ENCODE measurements at regions of chrX and their contacts with region 1.

Region 1: GRCh38 chrX:10189317-10190268 is 32.8 kb downstream of the CLCN4 start:
- DNase-seq: peak; percentile 70 to 83 (median 77)
- ATAC-seq: peak; percentile 88 to 93
- H3K4me3 ChIP-seq: no peak overlapping the region
- H3K27ac ChIP-seq: no peak overlapping the region
- H3K4me1 ChIP-seq: peaks cover 2% of the 10 kb centered on the region
- H3K27me3 ChIP-seq: no peaks in the 10 kb centered on the region

Region 2: DNA sequence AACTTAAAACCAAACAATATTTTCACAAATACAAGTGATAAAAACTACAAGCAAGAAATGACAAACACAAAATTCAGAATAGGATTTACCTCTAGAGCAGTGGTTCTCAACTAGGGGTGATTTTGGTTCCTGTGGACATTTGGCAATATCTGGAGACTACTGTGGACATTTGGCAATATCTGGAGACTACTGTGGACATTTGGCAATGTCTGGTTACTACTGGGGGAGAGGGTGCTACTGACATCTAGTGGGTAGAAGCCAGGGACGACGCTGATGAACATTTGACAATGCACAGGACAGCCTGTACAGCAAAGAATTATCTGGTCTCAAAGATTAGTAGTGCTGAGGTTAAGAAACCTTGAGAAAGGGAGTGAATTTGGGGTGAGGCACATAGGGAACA is 137.0 kb after region 1 on chrX:
- intact Hi-C with region 1: loop called in 1 of 4 experiments (anchors 5 kb)
- DNase-seq: peak in 2 of 3 donors; percentile 24 to 37
- ATAC-seq: peak; percentile 48 to 52
- H3K4me3 ChIP-seq: no peak overlapping the region
- H3K27ac ChIP-seq: no peak overlapping the region
- H3K4me1 ChIP-seq: no peaks in the 10 kb centered on the region
- H3K27me3 ChIP-seq: no peaks in the 10 kb centered on the region

Region 3: GRCh38 chrX:10615931-10616775 is 426.6 kb after region 1 on chrX:
- intact Hi-C with region 1: loop called in 1 of 4 experiments (anchors 5 kb)
- DNase-seq: peak; percentile 28 to 58 (median 55)
- ATAC-seq: peak; percentile 53 to 55
- H3K4me3 ChIP-seq: peak overlapping the region; percentile 20
- H3K27ac ChIP-seq: peak overlapping the region; percentile 19
- H3K4me1 ChIP-seq: peaks cover 1% of the 10 kb centered on the region
- H3K27me3 ChIP-seq: no peaks in the 10 kb centered on the region

Region 4: GRCh38 chrX:10636337-10636736 is 446.7 kb after region 1 on chrX:
- intact Hi-C with region 1: loop called (anchors 5 to 10 kb)
- DNase-seq: no peak
- ATAC-seq: peak; percentile 66 to 79
- H3K4me3 ChIP-seq: no peak overlapping the region
- H3K27ac ChIP-seq: no peak overlapping the region
- H3K4me1 ChIP-seq: no peaks in the 10 kb centered on the region
- H3K27me3 ChIP-seq: no peaks in the 10 kb centered on the region

Region 5: GRCh38 chrX:10722851-10723250 is 533.3 kb after region 1 on chrX:
- intact Hi-C with region 1: loop called in 2 of 4 experiments (anchors 5 to 10 kb)
- DNase-seq: peak in 1 of 3 donors; percentile 31
- ATAC-seq: peak; percentile 61 to 70
- H3K4me3 ChIP-seq: no peak overlapping the region
- H3K27ac ChIP-seq: no peak overlapping the region
- H3K4me1 ChIP-seq: no peaks in the 10 kb centered on the region
- H3K27me3 ChIP-seq: no peaks in the 10 kb centered on the region

Region 6: DNA sequence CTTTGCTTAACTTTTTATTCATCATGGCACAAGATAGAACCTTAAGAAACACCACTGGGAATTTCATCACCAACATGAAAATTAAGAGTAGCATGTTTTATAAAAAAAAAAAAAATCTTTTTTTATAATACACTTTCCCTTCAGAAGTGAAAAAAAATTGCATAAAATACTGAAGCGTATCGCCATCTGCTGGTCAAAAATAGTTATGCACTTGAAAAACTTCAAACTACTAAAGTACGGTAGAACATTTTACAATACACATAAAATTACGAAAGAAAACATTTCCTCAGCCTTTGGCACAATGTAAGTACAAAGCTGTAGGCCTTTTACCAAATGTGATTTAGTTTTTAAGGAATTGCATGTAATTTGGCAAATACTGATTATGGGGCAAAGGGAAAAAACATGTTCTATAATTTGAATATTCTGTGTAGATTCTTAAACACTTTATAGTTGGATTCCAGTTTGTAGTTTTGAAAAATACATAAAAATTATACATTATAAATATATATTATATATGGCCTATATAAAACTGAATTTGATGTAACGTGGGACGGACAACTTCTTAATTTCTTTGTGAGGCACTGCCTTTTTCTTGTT is 948.0 kb after region 1 on chrX:
- intact Hi-C with region 1: loop called in 2 of 4 experiments (anchors 5 to 10 kb)
- DNase-seq: no peak
- ATAC-seq: no peak
- H3K4me3 ChIP-seq: no peak overlapping the region
- H3K27ac ChIP-seq: no peak overlapping the region
- H3K4me1 ChIP-seq: no peaks in the 10 kb centered on the region
- H3K27me3 ChIP-seq: no peaks in the 10 kb centered on the region

Measured in right cardiac atrium (tissue), 5 donors.